MCF 10A (cell line): ENCODE measurements at regions of chr6 and their contacts with region 1.

Region 1: GRCh38 chr6:79078075-79079025 is at the start of gene PHIP:
- DNase-seq: peak; percentile 95
- H3K4me3 Mint-ChIP-seq: peak within 1 kb of the TSS; percentile 79
- H3K27ac Mint-ChIP-seq: peak within 1 kb of the TSS; percentile 98
- H3K4me1 Mint-ChIP-seq: peaks cover 5% of the 10 kb centered on the region
- H3K27me3 Mint-ChIP-seq: no peaks in the 10 kb centered on the region
- CTCF ChIP-seq: no peak
- total RNA-seq, gene PHIP: 25.3 and 26.5 TPM in 2 replicates

Region 2: GRCh38 chr6:78629154-78629721 is 449.1 kb before region 1 on chr6:
- CTCF ChIA-PET with region 1: no interaction called
- POLR2A ChIA-PET with region 1: no interaction called
- intact Hi-C with region 1: no loop called
- DNase-seq: no peak
- H3K4me3 Mint-ChIP-seq: no peak overlapping the region
- H3K27ac Mint-ChIP-seq: no peak overlapping the region
- H3K4me1 Mint-ChIP-seq: no peaks in the 10 kb centered on the region
- H3K27me3 Mint-ChIP-seq: no peaks in the 10 kb centered on the region
- CTCF ChIP-seq: no peak

Region 3: GRCh38 chr6:79184086-79184485 is 105.7 kb after region 1 on chr6:
- CTCF ChIA-PET with region 1: no interaction called
- POLR2A ChIA-PET with region 1: interaction called, 11 read pairs
- intact Hi-C with region 1: no loop called
- DNase-seq: no peak
- H3K4me3 Mint-ChIP-seq: no peak overlapping the region
- H3K27ac Mint-ChIP-seq: no peak overlapping the region
- H3K4me1 Mint-ChIP-seq: no peaks in the 10 kb centered on the region
- H3K27me3 Mint-ChIP-seq: no peaks in the 10 kb centered on the region
- CTCF ChIP-seq: no peak

Region 4: GRCh38 chr6:79239538-79240168 is 161.3 kb after region 1 on chr6:
- CTCF ChIA-PET with region 1: interaction called, 3 read pairs
- POLR2A ChIA-PET with region 1: interaction called, 81 read pairs
- intact Hi-C with region 1: no loop called
- DNase-seq: no peak
- H3K4me3 Mint-ChIP-seq: no peak overlapping the region
- H3K27ac Mint-ChIP-seq: peak overlapping the region; percentile 80
- H3K4me1 Mint-ChIP-seq: peaks cover 33% of the 10 kb centered on the region
- H3K27me3 Mint-ChIP-seq: no peaks in the 10 kb centered on the region
- CTCF ChIP-seq: no peak

Region 5: DNA sequence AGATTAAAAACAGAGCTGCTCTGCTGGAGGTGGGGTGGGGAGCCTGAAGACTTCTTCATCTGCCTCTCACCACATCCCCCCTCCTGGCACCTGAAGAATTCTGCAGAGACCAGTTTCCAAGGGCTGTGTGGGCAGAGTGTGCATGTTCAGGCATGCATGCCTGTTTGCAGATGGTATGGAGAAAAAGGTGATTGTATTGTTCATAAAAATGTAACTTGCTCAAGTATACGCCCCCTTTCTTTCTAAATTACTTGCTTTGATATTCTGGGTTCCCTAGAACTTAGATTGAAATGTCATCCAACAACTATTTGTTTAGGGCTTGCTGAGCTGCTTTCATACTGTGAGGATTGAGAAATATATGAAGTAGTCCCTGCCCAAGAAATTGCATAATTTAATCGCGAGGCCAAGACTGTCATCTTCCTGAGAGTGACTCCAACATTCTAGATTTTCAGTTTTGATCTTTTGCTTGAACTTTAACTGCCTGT is 375.2 kb after region 1 on chr6:
- CTCF ChIA-PET with region 1: no interaction called
- POLR2A ChIA-PET with region 1: interaction called, 83 read pairs
- intact Hi-C with region 1: no loop called
- DNase-seq: peak; percentile 89
- H3K4me3 Mint-ChIP-seq: peak overlapping the region; percentile 61
- H3K27ac Mint-ChIP-seq: peak overlapping the region; percentile 94
- H3K4me1 Mint-ChIP-seq: peaks cover 33% of the 10 kb centered on the region
- H3K27me3 Mint-ChIP-seq: no peaks in the 10 kb centered on the region
- CTCF ChIP-seq: no peak

Region 6: GRCh38 chr6:79544939-79545450 is 466.6 kb after region 1 on chr6:
- CTCF ChIA-PET with region 1: no interaction called
- POLR2A ChIA-PET with region 1: interaction called, 33 read pairs
- intact Hi-C with region 1: no loop called
- DNase-seq: peak; percentile 99
- H3K4me3 Mint-ChIP-seq: peak overlapping the region; percentile 51
- H3K27ac Mint-ChIP-seq: peak overlapping the region; percentile 95
- H3K4me1 Mint-ChIP-seq: peaks cover 8% of the 10 kb centered on the region
- H3K27me3 Mint-ChIP-seq: no peaks in the 10 kb centered on the region
- CTCF ChIP-seq: peak; percentile 25